ENCODE measurements at regions of chr18 and their contacts with region 1.

Region 1: DNA sequence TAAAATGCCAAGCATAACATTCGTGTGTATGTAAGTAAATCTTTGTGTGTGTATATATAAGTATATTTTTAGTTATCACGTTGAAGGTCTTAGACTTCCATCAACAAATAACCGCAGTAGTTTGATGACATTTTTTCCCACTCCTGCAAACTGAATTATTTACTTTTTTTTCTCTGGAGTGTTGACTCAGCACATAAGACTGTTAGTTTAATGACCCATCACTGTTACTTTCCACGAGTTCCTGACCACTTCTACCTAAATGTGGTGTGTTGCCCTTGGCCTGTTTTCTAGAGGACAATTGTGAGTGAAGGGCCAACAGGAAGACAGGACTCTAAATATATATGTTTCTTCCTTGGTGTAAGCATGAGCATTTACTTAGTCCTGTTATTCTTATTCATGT is 71.3 kb upstream of the TXNDC2 start:
- DNase-seq: peak; percentile 91
- ATAC-seq: peak; percentile 99
- H3K4me3 ChIP-seq: no peak overlapping the region
- H3K27ac ChIP-seq: peak overlapping the region; percentile 53
- H3K4me1 ChIP-seq: peaks cover 14% of the 10 kb centered on the region
- H3K27me3 ChIP-seq: no peaks in the 10 kb centered on the region
- CTCF ChIP-seq: no peak

Region 2: GRCh38 chr18:9743200-9744016 is 71.0 kb before region 1 on chr18:
- CTCF ChIA-PET with region 1: no interaction called
- POLR2A ChIA-PET with region 1: no interaction called
- intact Hi-C with region 1: loop called (anchors 2 kb)
- DNase-seq: peak; percentile 99
- ATAC-seq: peak; percentile 78
- H3K4me3 ChIP-seq: peak overlapping the region; percentile 50
- H3K27ac ChIP-seq: peak overlapping the region; percentile 92
- H3K4me1 ChIP-seq: peaks cover 56% of the 10 kb centered on the region
- H3K27me3 ChIP-seq: no peaks in the 10 kb centered on the region
- CTCF ChIP-seq: no peak

Region 3: GRCh38 chr18:9825571-9826073 is 11.2 kb after region 1 on chr18:
- CTCF ChIA-PET with region 1: no interaction called
- POLR2A ChIA-PET with region 1: no interaction called
- intact Hi-C with region 1: loop called (anchors 1 kb)
- DNase-seq: peak; percentile 95
- ATAC-seq: peak; percentile 81
- H3K4me3 ChIP-seq: peak overlapping the region; percentile 16; the same call in 1 of the 2 replicates
- H3K27ac ChIP-seq: peak overlapping the region; percentile 70
- H3K4me1 ChIP-seq: peaks cover 49% of the 10 kb centered on the region
- H3K27me3 ChIP-seq: no peaks in the 10 kb centered on the region
- CTCF ChIP-seq: no peak